ENCODE measurements at regions of chr11 and their contacts with region 1.

Region 1: GRCh38 chr11:83306200-83307080 is 20.3 kb upstream of the CCDC90B start:
- DNase-seq: no peak
- H3K4me3 ChIP-seq: no peak overlapping the region
- H3K4me3 Mint-ChIP-seq: no peak overlapping the region
- H3K27ac Mint-ChIP-seq: no peak overlapping the region
- H3K4me1 ChIP-seq: no peaks in the 10 kb centered on the region
- H3K4me1 Mint-ChIP-seq: peaks cover 4% of the 10 kb centered on the region
- H3K27me3 ChIP-seq: peaks cover 3% of the 10 kb centered on the region; the same call in 1 of the 2 replicates
- H3K27me3 Mint-ChIP-seq: no peaks in the 10 kb centered on the region
- CTCF ChIP-seq: no peak

Region 2: GRCh38 chr11:83317757-83318690 is 11.6 kb after region 1 on chr11:
- CTCF ChIA-PET with region 1: interaction called, 3 read pairs
- POLR2A ChIA-PET with region 1: interaction called, 22 read pairs
- intact Hi-C with region 1: no loop called
- DNase-seq: no peak
- H3K4me3 ChIP-seq: no peak overlapping the region
- H3K4me3 Mint-ChIP-seq: no peak overlapping the region
- H3K27ac Mint-ChIP-seq: no peak overlapping the region
- H3K4me1 ChIP-seq: peaks cover 20% of the 10 kb centered on the region
- H3K4me1 Mint-ChIP-seq: peaks cover 24% of the 10 kb centered on the region
- H3K27me3 ChIP-seq: no peaks in the 10 kb centered on the region
- H3K27me3 Mint-ChIP-seq: peaks cover 3% of the 10 kb centered on the region
- CTCF ChIP-seq: no peak

Measured in Caco-2 (cell line).